Heart right ventricle (tissue), 16 donors: ENCODE measurements at regions of chr3 and their contacts with region 1.

Region 1: GRCh38 chr3:6799264-6799915 is 61.5 kb upstream of the GRM7 start:
- DNase-seq: peak; percentile 9
- ATAC-seq: peak in 1 of 8 donors; percentile 47
- H3K4me3 ChIP-seq: no peak overlapping the region
- H3K27ac ChIP-seq: no peak overlapping the region
- H3K4me1 ChIP-seq: no peaks in the 10 kb centered on the region
- H3K27me3 ChIP-seq: peaks cover 0 to 10% (median 0%) of the 10 kb centered on the region in 7 donors
- CTCF ChIP-seq: peak; percentile 40 to 77 (median 72)

Region 2: DNA sequence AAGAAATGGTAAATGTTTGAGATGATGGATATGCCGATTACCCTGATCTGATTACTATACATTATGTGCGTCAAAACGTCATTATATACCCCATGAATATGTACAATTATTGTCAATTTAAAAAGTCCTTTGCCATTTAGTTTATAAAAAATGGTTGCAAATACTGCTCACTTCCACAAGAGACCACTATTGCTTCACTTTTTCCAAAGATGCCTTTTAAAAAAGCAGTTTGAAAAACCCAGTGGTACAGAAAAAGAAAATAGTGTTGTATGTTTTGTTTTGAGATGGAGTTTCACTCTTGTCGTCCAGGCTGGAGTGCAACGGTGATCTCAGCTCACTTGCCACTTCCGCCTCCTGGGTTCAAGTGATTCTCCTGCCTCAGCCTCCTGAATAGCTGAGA is 1572.6 kb before region 1 on chr3:
- intact Hi-C with region 1: loop called in 2 of 10 experiments (anchors 5 to 10 kb)
- DNase-seq: no peak
- ATAC-seq: no peak
- H3K4me3 ChIP-seq: no peak overlapping the region
- H3K27ac ChIP-seq: no peak overlapping the region
- H3K4me1 ChIP-seq: peaks cover 0 to 9% (median 4%) of the 10 kb centered on the region in 9 donors
- H3K27me3 ChIP-seq: peaks cover 0 to 18% (median 0%) of the 10 kb centered on the region in 7 donors
- CTCF ChIP-seq: peak in 7 of 9 donors; percentile 35 to 63 (median 45)

Region 3: DNA sequence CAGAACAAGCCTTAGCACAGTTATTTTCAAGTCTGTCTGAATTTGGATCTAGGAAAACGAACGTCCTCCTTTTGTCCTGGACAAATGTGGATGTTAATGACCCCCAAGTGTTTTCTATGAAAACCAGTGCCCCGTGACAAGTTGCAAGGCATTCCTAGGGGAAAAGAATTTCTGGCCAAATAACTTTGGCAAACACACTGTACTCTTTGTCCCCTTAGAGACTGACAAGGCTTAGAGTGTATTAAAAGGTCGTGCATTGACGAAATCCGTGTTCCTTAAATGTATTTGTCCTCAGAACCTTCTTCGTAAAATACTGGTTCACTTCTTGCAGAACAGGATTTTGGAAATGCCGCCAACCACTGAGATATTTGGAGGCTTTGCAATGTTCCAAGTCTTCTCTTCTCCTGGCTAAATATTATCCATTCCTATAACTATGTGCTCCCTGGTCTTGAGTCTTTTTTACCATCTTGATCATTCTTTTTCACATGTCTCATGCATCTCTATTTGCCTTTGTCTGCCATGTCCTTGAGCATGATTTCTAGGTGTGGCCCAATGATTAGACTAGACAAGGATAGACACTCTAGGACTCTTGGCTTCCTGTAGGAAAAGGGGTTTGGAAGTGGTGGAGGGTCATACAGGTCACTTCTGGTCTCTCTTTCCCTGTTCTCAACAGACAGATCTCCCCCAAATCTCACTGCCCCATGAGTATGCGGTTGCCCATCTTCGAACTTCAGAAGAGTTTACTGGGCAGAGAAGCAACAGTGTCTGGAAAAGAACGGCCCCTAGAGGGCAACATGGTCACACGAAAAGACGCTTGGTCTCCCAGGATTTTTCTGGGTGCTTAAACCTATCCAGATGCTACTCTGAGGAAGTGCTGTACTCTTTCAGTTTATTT is 1494.4 kb before region 1 on chr3:
- intact Hi-C with region 1: loop called in 2 of 10 experiments (anchors 5 kb)
- DNase-seq: peak in 1 of 2 donors; percentile 27
- ATAC-seq: peak; percentile 34 to 75 (median 54)
- H3K4me3 ChIP-seq: no peak overlapping the region
- H3K27ac ChIP-seq: no peak overlapping the region
- H3K4me1 ChIP-seq: peaks cover 0 to 32% (median 0%) of the 10 kb centered on the region in 9 donors
- H3K27me3 ChIP-seq: no peaks in the 10 kb centered on the region
- CTCF ChIP-seq: peak; percentile 17 to 69 (median 63)

Region 4: GRCh38 chr3:6392123-6392522 is 407.3 kb before region 1 on chr3:
- intact Hi-C with region 1: loop called in 3 of 10 experiments (anchors 10 kb)
- DNase-seq: no peak
- ATAC-seq: no peak
- H3K4me3 ChIP-seq: no peak overlapping the region
- H3K27ac ChIP-seq: no peak overlapping the region
- H3K4me1 ChIP-seq: no peaks in the 10 kb centered on the region
- H3K27me3 ChIP-seq: peaks cover 0 to 7% (median 0%) of the 10 kb centered on the region in 7 donors
- CTCF ChIP-seq: peak in 5 of 9 donors; percentile 6 to 33 (median 20)

Region 5: GRCh38 chr3:6753536-6753935 is 45.9 kb before region 1 on chr3:
- intact Hi-C with region 1: no loop called
- DNase-seq: no peak
- ATAC-seq: no peak
- H3K4me3 ChIP-seq: no peak overlapping the region
- H3K27ac ChIP-seq: no peak overlapping the region
- H3K4me1 ChIP-seq: no peaks in the 10 kb centered on the region
- H3K27me3 ChIP-seq: peaks cover 0 to 4% (median 0%) of the 10 kb centered on the region in 7 donors
- CTCF ChIP-seq: no peak